ENCODE measurements at regions of chr3 and their contacts with region 1.

Region 1: GRCh38 chr3:10026084-10026890 is at the start of gene FANCD2:
- H3K4me3 Mint-ChIP-seq: peak within 1 kb of the TSS; percentile 89
- H3K27ac Mint-ChIP-seq: peak within 1 kb of the TSS; percentile 95
- H3K4me1 Mint-ChIP-seq: peaks cover 32% of the 10 kb centered on the region
- H3K27me3 Mint-ChIP-seq: no peaks in the 10 kb centered on the region

Region 2: GRCh38 chr3:9986237-9986725 is 40.0 kb before region 1 on chr3:
- intact Hi-C with region 1: loop called (anchors 1 kb)
- H3K4me3 Mint-ChIP-seq: peak overlapping the region; percentile 90
- H3K27ac Mint-ChIP-seq: peak overlapping the region; percentile 96
- H3K4me1 Mint-ChIP-seq: peaks cover 24% of the 10 kb centered on the region
- H3K27me3 Mint-ChIP-seq: no peaks in the 10 kb centered on the region

Region 3: DNA sequence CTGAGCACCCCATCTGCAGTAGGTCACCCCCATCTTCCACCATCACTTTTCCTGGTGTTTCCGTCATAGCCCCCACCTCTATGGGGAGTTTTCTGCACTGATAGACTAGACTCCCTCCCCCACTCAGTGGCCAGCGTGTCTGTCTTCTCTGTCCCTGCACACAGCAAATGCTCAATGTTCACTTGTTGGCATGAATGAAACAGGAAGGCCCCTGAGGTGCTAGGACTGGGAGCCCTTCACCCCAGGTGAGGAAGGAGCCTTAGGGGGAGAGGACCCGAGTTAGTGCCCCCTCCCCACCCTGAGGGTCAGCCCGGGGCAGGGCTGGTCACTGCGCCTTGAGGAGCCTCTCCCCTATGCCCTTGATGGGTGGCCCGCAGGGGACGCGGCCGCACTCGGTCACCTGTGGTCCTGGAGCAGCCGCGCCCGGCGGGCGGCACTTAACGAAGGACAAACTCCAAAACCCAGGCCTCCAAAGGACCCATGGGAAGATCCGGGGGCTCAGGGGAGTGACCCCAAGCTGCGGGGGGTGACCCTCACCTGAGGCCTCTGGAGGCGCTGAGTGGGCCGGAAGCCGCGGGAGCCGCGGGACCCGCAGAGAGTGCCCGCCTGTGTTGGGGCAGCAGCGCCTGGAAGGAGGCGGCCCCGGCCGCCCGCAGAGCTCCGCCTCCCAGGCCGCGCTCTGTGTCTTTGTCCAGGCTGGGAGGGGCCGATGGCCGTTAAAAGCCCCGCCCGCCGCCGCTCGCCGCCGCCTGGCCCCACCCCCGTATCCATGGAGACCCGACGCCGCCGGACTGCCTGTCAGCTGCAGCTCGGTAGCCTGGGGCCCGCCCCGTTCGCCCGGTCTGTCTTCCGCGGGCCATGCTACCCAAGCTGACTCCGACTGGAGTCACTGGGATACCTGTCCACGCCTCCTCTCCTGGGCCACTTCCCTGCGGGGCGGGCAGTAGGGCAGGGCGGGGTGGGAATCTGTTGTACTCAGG is 15.5 kb before region 1 on chr3:
- intact Hi-C with region 1: loop called (anchors 1 kb)
- H3K4me3 Mint-ChIP-seq: peak overlapping the region; percentile 73
- H3K27ac Mint-ChIP-seq: peak overlapping the region; percentile 49
- H3K4me1 Mint-ChIP-seq: peaks cover 54% of the 10 kb centered on the region
- H3K27me3 Mint-ChIP-seq: peaks cover 3% of the 10 kb centered on the region

Region 4: GRCh38 chr3:10115326-10116137 is 89.2 kb after region 1 on chr3 and contains the start of gene BRK1:
- intact Hi-C with region 1: loop called (anchors 1 kb)
- H3K4me3 Mint-ChIP-seq: peak within 1 kb of the TSS; percentile 96
- H3K27ac Mint-ChIP-seq: peak within 1 kb of the TSS; percentile 89
- H3K4me1 Mint-ChIP-seq: peaks cover 22% of the 10 kb centered on the region
- H3K27me3 Mint-ChIP-seq: no peaks in the 10 kb centered on the region

Region 5: GRCh38 chr3:11050666-11051323 is 1024.5 kb after region 1 on chr3:
- intact Hi-C with region 1: no loop called
- H3K4me3 Mint-ChIP-seq: no peak overlapping the region
- H3K27ac Mint-ChIP-seq: no peak overlapping the region
- H3K4me1 Mint-ChIP-seq: peaks cover 10% of the 10 kb centered on the region
- H3K27me3 Mint-ChIP-seq: peaks cover 40% of the 10 kb centered on the region